ENCODE measurements at regions of chr15 and their contacts with region 1.

Region 1: DNA sequence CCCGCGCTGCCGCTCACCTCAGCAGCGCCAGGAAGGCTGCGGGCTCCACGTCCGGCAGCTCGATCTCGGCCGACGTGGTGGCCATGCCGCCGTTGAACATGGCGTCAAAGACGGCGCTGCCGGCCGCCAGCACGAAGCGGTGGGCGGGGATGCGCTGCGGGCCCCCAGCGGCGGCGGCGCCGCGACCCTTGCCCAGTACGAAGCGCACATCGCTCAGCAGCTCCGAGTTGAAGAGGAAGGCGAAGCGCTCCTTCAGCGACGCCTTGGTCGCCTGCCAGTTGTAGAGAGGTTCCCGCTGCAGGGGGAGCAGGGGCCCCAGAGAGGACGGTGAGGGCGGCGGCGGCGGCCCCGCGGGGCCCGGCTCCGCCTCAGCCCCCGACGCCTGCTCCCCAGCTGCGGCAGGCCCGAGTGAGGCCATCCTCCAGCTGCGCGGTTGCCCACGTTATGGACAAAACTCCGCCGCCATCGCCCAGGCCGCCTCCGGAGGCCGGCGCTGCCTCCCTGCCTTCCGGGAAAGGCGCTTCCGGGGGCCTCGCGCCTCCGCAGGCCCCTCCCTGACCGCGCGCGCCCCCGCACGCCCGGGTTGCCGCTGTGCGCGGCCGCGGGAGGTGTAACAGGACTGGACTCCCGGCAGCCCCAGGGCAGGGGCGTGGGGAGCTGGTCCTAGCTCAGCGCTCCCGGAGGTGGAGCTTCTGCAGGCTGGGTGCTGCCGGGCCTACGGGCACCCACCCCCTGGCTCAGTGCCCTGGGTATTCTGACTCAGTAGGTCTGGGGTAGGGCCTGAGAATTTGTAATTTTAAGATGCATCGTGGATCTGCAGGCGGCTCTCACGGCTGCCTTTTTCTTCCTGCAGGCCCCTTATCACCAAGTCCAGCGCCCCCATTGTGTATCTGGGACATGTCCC is at the start of gene BTBD1:
- DNase-seq: peak; percentile 97
- H3K4me3 Mint-ChIP-seq: no peak within 1 kb of the TSS
- H3K27ac Mint-ChIP-seq: peak within 1 kb of the TSS; percentile 79
- H3K4me1 Mint-ChIP-seq: peaks cover 11% of the 10 kb centered on the region
- H3K27me3 Mint-ChIP-seq: no peaks in the 10 kb centered on the region
- CTCF ChIP-seq: no peak
- total RNA-seq, gene BTBD1: 42.7 and 57.0 TPM in 2 replicates

Region 2: GRCh38 chr15:83199288-83199687 is 132.3 kb after region 1 on chr15:
- CTCF ChIA-PET with region 1: no interaction called
- POLR2A ChIA-PET with region 1: interaction called, 34 read pairs
- intact Hi-C with region 1: no loop called
- DNase-seq: no peak
- H3K4me3 Mint-ChIP-seq: no peak overlapping the region
- H3K27ac Mint-ChIP-seq: peak overlapping the region; percentile 39
- H3K4me1 Mint-ChIP-seq: peaks cover 44% of the 10 kb centered on the region
- H3K27me3 Mint-ChIP-seq: no peaks in the 10 kb centered on the region
- CTCF ChIP-seq: no peak

Region 3: GRCh38 chr15:83207622-83208411 is 140.8 kb after region 1 on chr15 and contains the start of gene HDGFL3:
- CTCF ChIA-PET with region 1: interaction called, 4 read pairs
- POLR2A ChIA-PET with region 1: interaction called, 34 read pairs
- intact Hi-C with region 1: loop called (anchors 1 kb)
- DNase-seq: peak; percentile 60
- H3K4me3 Mint-ChIP-seq: no peak within 1 kb of the TSS
- H3K27ac Mint-ChIP-seq: peak within 1 kb of the TSS; percentile 91
- H3K4me1 Mint-ChIP-seq: peaks cover 32% of the 10 kb centered on the region
- H3K27me3 Mint-ChIP-seq: no peaks in the 10 kb centered on the region
- CTCF ChIP-seq: peak; percentile 19
- total RNA-seq, gene HDGFL3: 80.4 and 104 TPM in 2 replicates

Region 4: DNA sequence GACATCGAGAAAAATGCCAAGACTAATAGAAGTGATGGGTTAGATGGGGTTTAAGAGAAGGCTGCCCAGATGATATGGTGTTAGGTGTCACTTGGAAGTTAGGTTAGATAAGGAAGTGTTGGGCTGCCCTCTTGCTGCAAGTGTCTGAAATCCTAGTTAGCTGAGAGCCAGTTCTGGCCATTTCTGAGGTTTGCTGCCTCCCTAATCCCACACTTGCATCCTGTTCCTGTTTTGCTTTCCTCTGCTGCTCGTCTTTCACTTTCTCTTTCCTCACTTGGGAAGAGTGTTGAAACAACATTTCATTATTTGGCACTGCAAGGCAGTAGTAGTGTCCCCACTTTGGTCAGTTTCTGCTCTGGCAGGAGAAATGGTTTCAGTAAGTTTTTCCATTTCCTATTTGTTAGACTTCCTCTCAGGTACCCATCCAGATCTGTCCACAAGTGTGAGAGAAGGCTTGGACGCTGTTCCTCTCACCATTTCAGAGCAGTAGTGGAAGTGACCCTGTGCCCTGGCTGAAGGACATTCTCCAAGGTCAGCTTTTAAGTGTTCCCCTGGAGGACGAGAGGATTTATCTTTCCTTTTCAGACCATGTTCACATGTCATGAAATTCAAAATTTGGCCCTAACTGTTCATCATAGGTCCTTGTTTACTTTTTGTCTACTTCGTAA is 680.2 kb after region 1 on chr15:
- CTCF ChIA-PET with region 1: no interaction called
- POLR2A ChIA-PET with region 1: no interaction called
- intact Hi-C with region 1: no loop called
- DNase-seq: peak; percentile 60
- H3K4me3 Mint-ChIP-seq: peak overlapping the region; percentile 37
- H3K27ac Mint-ChIP-seq: no peak overlapping the region
- H3K4me1 Mint-ChIP-seq: peaks cover 10% of the 10 kb centered on the region
- H3K27me3 Mint-ChIP-seq: no peaks in the 10 kb centered on the region
- CTCF ChIP-seq: peak; percentile 33